Posterior cingulate gyrus (tissue), 11 donors: ENCODE measurements at regions of chr2 and their contacts with region 1.

Region 1: GRCh38 chr2:48398285-48399002 is 131.5 kb upstream of the STON1 start:
- DNase-seq: peak in 2 of 10 donors; percentile 24 to 83

Region 2: DNA sequence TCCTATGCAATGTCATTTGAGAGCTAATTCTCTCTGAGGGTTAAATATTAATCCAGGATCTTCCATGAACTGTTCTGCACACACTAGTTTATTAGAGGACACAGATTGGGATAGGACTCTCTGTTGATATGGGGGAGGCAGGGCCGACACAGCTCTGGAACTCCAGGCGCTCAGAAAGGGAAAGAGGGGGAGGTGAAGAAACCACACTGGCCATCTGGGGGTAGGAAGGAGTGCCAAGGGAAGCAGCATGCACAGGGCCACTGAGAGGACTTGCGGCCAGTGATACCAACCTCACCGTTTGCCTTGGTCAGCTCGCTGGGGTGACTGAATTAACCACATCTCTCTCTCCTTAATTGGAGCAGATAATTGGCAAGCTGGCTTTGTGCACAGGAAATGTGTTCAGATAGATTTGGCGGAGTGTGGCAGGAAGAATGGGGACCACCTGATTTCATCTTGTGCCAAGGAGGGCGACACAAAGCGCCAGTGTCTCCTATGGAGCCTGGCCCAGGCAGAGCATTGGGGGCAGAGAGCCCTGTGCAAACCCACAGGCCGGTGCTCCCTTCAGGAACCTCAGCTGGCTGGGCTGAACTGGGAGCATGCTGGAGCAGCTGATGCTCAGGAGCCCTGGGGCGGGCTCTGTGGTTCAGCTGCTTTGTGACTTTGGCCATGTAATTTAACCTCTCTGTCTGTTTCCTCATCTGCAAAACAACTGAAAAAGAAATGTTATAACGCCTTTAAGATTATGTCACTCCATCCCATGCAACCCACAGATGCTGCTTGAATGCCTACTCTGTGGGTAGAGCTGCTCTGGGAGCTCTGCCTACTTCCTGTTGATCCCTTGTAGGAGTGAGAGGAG is 16.8 kb after region 1 on chr2:
- intact Hi-C with region 1: loop called (anchors 1 kb)
- DNase-seq: peak; percentile 68 to 95 (median 75)